Psoas muscle (tissue), 8 donors: ENCODE measurements at regions of chr3 and their contacts with region 1.

Region 1: GRCh38 chr3:15377961-15378791 is 45.8 kb upstream of the SH3BP5 start:
- DNase-seq: peak; percentile 93 to 96
- ATAC-seq: peak; percentile 98 to 100 (median 100)
- H3K4me3 ChIP-seq: peak overlapping the region; percentile 43
- H3K27ac ChIP-seq: peak overlapping the region; percentile 62
- H3K4me1 ChIP-seq: no peaks in the 10 kb centered on the region
- H3K27me3 ChIP-seq: no peaks in the 10 kb centered on the region
- CTCF ChIP-seq: peak; percentile 83

Region 2: DNA sequence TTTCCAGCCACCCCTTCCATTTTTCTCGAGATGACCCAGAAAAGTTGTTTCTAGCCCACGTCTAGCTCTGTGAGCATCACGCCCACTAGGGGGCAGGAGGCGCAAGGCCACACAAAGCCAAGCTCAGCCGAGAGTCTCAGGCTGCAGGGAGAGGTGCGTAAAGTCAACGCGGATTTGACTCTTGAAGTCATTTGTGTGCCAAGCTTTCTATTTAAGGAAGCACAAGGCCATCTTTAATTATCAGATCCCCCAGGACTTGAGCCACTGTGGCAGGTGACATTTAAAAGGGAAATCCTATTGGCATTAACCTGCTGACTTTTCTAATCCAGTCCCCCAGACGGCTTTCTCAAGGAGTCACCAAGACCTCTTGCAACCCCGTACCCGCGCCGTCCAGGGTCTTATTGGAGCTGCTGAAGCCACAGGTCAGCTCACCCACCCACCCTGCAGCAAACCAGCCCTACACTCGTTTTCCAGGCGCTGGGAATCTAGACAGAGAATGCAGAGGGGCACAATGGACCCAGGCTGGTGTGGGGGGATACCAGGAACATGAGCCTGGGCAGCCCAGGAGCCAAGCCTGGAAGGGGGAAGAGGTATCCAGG is 110.0 kb before region 1 on chr3:
- intact Hi-C with region 1: loop called (anchors 1 to 2 kb)
- DNase-seq: peak; percentile 88 to 91
- ATAC-seq: peak; percentile 80 to 91 (median 88)
- H3K4me3 ChIP-seq: peak overlapping the region; percentile 12
- H3K27ac ChIP-seq: peak overlapping the region; percentile 39
- H3K4me1 ChIP-seq: peaks cover 29% of the 10 kb centered on the region
- H3K27me3 ChIP-seq: no peaks in the 10 kb centered on the region
- CTCF ChIP-seq: peak; percentile 96

Region 3: DNA sequence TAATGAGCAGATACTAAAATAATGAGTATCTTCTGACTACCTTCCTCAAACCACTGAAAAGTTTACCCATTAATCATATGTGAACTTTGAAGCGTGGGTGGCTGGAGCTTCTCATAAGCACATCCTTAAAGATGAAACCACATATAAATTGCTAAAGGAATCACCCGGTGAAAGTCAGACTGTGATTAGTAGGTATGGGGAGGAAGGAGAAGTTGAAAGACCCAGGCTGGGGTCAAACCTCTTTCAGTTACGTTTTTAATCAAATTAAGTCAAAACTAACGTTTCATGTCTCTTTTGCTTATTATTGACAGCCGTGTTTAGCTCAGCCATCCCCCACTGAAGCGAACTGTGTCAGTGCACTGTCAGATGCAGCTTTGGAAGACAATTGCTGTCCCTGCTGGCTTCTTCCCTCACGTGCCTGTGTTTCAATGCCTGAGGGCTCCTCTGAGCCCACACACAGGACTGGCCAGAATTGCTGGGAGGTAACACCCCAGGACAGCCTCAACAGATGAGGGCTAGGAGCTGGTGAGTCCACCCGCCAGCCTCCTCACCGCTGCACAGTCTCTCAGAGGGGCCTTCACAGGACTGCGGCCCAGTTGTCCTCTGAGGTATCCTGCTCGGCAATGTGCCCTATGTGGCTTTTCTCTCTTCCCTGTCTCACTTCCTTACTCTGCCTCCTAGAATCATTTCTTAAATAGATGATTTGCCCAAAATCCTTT is 16.5 kb before region 1 on chr3:
- intact Hi-C with region 1: no loop called
- DNase-seq: no peak
- ATAC-seq: no peak
- H3K4me3 ChIP-seq: no peak overlapping the region
- H3K27ac ChIP-seq: no peak overlapping the region
- H3K4me1 ChIP-seq: no peaks in the 10 kb centered on the region
- H3K27me3 ChIP-seq: peaks cover 0 to 2% (median 0%) of the 10 kb centered on the region in 3 donors
- CTCF ChIP-seq: no peak